ENCODE measurements at regions of chr17 and their contacts with region 1.

Region 1: GRCh38 chr17:35764123-35764991 is 3.7 kb downstream of the C17orf50 start:
- DNase-seq: peak; percentile 89
- ATAC-seq: peak; percentile 93
- H3K4me3 Mint-ChIP-seq: peak overlapping the region; percentile 91
- H3K27ac Mint-ChIP-seq: peak overlapping the region; percentile 75
- H3K4me1 Mint-ChIP-seq: peaks cover 9% of the 10 kb centered on the region
- H3K27me3 Mint-ChIP-seq: peaks cover 4% of the 10 kb centered on the region
- CTCF ChIP-seq: peak; percentile 77

Region 2: DNA sequence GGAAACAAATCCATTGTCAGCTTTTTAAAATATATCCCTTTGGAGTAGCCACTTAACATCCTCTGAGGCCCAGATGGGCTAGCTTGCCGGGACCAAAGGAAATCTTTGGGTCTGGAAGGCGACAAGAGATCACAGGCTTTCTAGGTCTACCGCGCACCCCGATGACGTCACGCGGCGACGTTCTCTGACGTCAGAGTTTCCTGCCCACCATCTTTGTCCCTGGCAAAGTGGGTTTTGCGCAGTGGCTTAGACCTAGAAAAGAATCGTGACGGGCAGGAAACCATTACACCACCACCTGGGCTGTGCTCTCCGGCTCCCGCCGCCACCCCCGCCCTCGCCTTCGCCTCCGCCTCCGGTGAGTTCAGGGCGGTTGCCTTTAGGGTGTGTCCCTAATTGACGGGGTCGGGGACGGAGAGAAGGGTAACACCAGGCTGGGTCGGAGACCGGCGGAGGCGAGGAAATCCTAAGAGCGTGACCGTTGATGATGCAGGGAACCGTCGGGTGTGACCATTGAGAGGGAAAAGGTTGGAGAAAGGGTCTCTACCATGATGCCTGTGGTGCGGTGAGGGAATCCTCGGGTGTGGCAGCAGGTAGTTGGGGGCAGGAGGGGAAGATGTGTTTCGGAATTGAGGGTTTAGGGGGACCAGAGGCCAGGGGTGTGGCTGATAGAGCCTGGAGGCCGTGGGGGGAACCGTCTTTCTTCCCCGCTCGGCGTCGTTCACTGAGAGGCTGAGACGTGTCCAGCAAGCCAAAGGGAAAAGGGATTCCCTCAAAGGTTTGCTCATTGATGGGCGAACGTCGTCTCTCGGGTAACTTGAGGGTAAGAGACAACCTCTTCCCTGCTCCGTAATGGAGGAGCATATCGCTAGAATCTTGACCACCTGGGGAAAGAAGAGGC is 177.0 kb before region 1 on chr17 and contains the start of gene AP2B1:
- CTCF ChIA-PET with region 1: no interaction called
- POLR2A ChIA-PET with region 1: no interaction called
- intact Hi-C with region 1: loop called (anchors 1 kb)
- DNase-seq: peak; percentile 97
- ATAC-seq: peak; percentile 97
- H3K4me3 Mint-ChIP-seq: peak within 1 kb of the TSS; percentile 100
- H3K27ac Mint-ChIP-seq: peak within 1 kb of the TSS; percentile 100
- H3K4me1 Mint-ChIP-seq: peaks cover 32% of the 10 kb centered on the region
- H3K27me3 Mint-ChIP-seq: peaks cover 5% of the 10 kb centered on the region
- CTCF ChIP-seq: no peak
- total RNA-seq, gene AP2B1: 129 and 152 TPM in 2 replicates

Region 3: DNA sequence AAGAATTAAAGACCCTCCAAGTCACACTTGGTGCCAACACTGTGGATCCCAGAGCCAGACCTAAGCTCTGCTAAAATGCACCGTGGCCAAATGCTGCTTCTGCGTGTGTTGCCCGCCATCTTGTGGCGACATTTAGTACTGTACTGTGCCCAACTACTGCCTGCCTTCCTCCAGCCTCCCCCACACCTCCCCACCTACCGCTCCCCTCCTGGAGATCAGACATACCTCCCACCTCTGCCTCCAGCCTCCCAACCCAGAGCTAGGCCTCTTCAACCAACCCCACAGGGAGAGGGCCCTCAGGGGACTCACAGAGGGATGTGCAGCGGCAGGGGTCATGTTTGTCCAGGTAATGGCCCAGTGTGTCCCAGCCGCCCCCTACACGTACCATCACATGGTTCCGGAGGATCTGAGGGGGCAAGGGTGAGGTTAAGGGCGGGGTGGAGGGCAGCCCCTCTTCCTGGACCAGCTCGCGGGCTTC is 16.8 kb before region 1 on chr17:
- CTCF ChIA-PET with region 1: interaction called, 11 read pairs
- POLR2A ChIA-PET with region 1: interaction called, 7 read pairs
- intact Hi-C with region 1: no loop called
- DNase-seq: peak; percentile 64
- ATAC-seq: peak; percentile 97
- H3K4me3 Mint-ChIP-seq: no peak overlapping the region
- H3K27ac Mint-ChIP-seq: no peak overlapping the region
- H3K4me1 Mint-ChIP-seq: peaks cover 6% of the 10 kb centered on the region
- H3K27me3 Mint-ChIP-seq: peaks cover 35% of the 10 kb centered on the region
- CTCF ChIP-seq: no peak

Region 4: DNA sequence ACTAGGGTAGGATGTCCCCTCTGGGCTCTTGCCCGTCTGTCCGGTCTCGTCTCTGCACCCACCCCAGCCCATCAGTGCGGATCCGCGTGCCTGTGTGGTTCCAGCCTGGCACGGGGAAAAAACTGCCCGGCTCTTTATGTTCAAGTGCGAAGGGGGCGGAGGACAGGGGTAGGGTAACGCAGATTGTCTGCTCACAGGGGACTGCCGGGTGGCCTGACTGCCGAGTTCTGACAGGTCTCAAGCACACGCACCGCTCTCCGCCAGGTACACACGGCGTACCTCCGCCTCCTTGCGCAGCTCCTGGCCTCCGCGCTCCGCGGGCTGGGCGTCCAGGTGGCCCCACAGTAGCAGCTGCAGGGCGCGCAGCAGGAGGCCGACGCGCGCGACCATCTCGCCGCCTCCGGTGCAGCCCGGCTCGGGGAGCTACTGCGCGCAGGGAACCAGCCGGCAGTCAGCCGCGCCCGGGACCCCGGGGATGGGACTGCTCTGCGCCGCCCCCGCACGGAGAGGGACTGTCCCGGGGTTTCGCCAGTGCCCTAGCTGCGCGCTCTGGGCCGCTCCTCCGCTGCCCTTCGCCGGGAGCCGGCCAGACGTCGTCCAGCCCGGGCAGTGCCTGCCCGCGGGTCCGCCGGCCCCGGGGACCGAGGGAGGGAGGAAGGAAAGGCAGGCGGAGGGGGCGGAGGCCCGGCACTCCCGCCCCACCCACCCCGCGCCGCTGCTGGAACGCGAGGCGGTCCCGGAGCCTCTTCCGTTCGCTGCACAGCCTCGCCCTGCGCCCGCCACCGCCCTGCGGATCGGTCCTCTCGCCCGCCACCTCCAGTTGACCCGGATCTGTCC is 30.8 kb after region 1 on chr17 and contains the start of gene MMP28:
- CTCF ChIA-PET with region 1: interaction called, 21 read pairs
- POLR2A ChIA-PET with region 1: interaction called, 3 read pairs
- intact Hi-C with region 1: no loop called
- DNase-seq: peak; percentile 42
- ATAC-seq: peak; percentile 83
- H3K4me3 Mint-ChIP-seq: peak within 1 kb of the TSS; percentile 79
- H3K27ac Mint-ChIP-seq: no peak within 1 kb of the TSS
- H3K4me1 Mint-ChIP-seq: peaks cover 17% of the 10 kb centered on the region
- H3K27me3 Mint-ChIP-seq: peaks cover 43% of the 10 kb centered on the region
- CTCF ChIP-seq: no peak
- total RNA-seq, gene MMP28: 0.59 TPM in 1 of 2 replicates, not detected in the other

Region 5: DNA sequence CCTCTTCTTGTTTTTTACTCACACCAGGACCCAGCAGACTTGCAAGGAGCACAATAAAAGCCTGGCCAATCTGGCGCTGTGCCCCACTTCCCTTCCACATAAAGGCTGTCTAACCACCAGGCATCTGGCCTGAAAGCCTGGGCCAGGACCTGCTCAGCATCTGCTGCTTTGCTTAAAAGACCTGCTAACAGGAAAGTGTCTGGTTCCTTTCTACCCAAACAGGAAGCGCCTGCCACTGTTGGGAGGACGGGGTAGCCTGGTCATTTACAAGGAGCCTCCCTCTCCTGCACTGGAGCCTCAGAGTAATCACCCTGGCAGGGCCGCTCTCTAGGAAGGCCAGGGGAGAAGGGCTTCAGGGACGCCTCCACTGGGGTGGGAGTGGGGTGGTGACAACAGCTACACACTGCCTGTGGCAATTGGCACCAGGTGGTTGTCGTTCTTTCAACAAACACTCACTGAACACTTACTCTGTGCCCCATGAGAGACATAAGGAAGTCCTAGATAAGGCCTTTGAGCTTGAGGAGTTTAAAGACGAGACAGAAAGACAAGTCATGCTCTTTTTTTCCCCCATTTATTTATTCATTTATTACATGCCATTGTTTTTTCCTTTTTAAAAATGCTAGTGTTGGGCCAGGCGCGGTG is 37.3 kb after region 1 on chr17:
- CTCF ChIA-PET with region 1: interaction called, 43 read pairs
- POLR2A ChIA-PET with region 1: interaction called, 15 read pairs
- intact Hi-C with region 1: loop called (anchors 1 kb)
- DNase-seq: peak; percentile 33
- ATAC-seq: peak; percentile 63
- H3K4me3 Mint-ChIP-seq: peak overlapping the region; percentile 42
- H3K27ac Mint-ChIP-seq: peak overlapping the region; percentile 89
- H3K4me1 Mint-ChIP-seq: peaks cover 24% of the 10 kb centered on the region
- H3K27me3 Mint-ChIP-seq: peaks cover 2% of the 10 kb centered on the region
- CTCF ChIP-seq: no peak

Region 6: DNA sequence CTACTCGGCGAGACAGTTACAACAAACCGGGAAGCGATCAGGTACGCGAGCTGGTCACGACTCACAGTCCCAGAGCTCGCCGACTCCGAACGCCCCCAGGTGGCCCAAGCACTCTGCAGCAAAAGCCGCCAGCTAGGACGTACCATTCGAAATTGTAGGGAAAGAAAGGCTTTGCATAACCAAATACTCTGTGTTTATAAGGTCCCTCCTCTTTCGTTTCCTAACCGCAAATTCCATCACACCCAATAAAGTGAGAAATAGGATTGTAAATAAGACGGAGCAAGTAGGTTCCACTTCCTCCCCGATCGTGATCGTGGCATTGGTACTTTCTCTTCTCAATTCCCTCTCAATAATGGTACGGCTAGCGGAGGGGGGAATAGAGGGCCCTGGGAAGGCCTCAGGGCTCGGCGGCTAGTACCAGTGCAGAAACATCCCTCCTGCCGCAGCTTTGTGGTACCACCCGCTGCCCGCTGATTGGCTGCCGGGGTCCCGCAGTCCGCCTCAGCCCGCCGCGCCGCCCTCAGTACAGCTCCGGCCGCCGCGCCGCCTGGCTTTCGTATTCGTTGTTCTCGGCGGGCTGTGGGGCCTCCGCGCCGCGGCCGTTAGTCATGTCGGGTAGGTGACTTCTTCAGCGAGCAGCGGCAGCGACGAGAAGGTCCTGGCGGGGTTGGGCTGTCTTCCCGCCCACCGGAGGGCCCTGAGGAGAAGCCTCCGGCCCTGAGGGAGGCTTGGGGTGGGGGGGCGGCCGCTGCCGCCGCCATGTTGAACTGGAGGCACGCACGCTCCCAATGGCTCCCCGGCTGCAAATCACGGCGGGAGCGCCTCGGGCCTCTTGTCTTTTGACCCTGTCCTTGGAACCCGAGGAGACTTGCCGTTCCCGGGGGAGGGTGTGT is 44.9 kb after region 1 on chr17 and contains the start of gene TAF15:
- CTCF ChIA-PET with region 1: interaction called, 158 read pairs
- POLR2A ChIA-PET with region 1: interaction called, 121 read pairs
- intact Hi-C with region 1: loop called (anchors 1 kb)
- DNase-seq: peak; percentile 91
- ATAC-seq: peak; percentile 88
- H3K4me3 Mint-ChIP-seq: peak within 1 kb of the TSS; percentile 93
- H3K27ac Mint-ChIP-seq: peak within 1 kb of the TSS; percentile 100
- H3K4me1 Mint-ChIP-seq: peaks cover 55% of the 10 kb centered on the region
- H3K27me3 Mint-ChIP-seq: no peaks in the 10 kb centered on the region
- CTCF ChIP-seq: no peak
- total RNA-seq, gene TAF15: 224 and 243 TPM in 2 replicates